PC-3 (cell line): ENCODE measurements at regions of chr19 and their contacts with region 1.

Region 1: GRCh38 chr19:44660081-44660480 is 11.2 kb upstream of the CEACAM19 start:
- DNase-seq: peak; percentile 45
- ATAC-seq: peak; percentile 63
- H3K4me3 ChIP-seq: no peak overlapping the region
- H3K27ac ChIP-seq: no peak overlapping the region
- H3K4me1 ChIP-seq: 0 out of 2 replicates have a peak, but pooled peaks cover 3% of the 10 kb centered on the region
- H3K27me3 ChIP-seq: no peaks in the 10 kb centered on the region
- CTCF ChIP-seq: no peak

Region 2: GRCh38 chr19:44576843-44577565 is 83.1 kb before region 1 on chr19:
- CTCF ChIA-PET with region 1: interaction called, 12 read pairs
- POLR2A ChIA-PET with region 1: no interaction called
- intact Hi-C with region 1: no loop called
- DNase-seq: peak; percentile 71
- ATAC-seq: peak; percentile 87
- H3K4me3 ChIP-seq: no peak overlapping the region
- H3K27ac ChIP-seq: no peak overlapping the region
- H3K4me1 ChIP-seq: peaks cover 15% of the 10 kb centered on the region
- H3K27me3 ChIP-seq: no peaks in the 10 kb centered on the region
- CTCF ChIP-seq: peak; percentile 76

Region 3: DNA sequence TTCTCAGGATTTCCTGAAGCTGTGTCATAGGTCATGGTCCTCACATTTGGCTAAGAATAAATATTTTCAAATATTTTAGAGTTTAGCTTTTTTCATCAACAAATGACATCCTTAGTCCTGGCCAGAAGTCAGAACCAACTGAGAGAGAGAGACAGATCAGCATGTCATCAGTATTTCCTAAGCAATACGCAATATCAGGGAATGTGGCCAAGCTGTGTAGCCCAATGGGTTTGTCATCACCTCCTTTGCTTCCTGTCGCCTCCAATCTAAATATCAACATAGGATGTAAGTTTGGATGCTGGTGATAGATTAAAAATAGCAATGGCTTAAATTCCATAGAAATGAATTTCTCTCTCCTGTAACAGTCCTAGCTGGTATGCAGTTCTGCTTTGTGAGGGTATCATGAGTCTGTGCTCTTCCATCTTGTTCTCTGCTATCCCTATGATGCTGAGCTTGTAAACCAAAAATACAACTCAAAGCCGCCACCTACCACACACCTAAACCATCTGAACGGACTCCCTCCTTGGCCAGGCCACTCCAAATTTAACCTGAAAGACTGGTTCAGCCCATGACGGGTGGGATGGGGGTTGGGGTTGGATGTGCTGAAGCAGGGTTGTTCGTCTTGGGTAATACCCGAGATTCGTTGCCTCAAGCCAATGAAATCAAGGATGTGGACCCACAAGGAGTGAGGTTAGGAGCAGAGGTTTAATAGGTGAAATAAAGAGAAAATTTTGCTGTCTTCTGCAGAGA is 56.7 kb before region 1 on chr19:
- CTCF ChIA-PET with region 1: no interaction called
- POLR2A ChIA-PET with region 1: no interaction called
- intact Hi-C with region 1: no loop called
- DNase-seq: peak; percentile 48
- ATAC-seq: no peak
- H3K4me3 ChIP-seq: no peak overlapping the region
- H3K27ac ChIP-seq: no peak overlapping the region
- H3K4me1 ChIP-seq: peaks cover 29% of the 10 kb centered on the region
- H3K27me3 ChIP-seq: no peaks in the 10 kb centered on the region
- CTCF ChIP-seq: no peak

Region 4: DNA sequence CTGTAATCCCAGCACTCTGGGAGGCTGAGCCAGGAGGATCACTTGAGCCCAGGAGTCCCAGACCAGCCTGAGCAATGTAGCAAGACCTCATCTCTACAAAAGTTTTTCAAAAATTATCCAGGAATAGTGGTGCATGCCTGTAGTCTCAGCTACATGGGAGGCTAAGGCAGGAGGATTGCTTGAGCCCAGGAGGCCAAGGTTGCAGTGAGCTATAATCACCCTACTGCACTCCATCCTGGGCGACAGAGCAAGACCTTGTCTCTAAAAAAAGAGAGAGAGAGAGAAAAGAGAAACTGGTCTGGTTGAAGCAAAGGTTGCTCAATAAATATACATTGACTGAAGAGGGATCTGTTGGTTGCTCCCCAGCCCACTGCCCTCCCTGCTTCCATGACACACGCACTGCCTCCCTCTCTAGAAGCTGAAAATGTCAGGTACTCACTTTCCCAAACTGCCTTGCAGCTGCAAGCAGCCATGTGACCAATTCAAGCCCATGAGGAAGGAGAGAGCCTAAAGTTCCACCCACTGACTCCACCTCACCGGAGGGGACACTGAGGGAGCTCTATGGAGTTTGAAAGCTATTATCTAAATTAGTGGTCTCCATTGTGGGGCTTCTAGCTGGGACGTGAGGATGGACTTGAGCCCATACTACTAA is 52.9 kb after region 1 on chr19:
- CTCF ChIA-PET with region 1: no interaction called
- POLR2A ChIA-PET with region 1: interaction called, 15 read pairs
- intact Hi-C with region 1: no loop called
- DNase-seq: no peak
- ATAC-seq: no peak
- H3K4me3 ChIP-seq: no peak overlapping the region
- H3K27ac ChIP-seq: no peak overlapping the region
- H3K4me1 ChIP-seq: peaks cover under 1% of the 10 kb centered on the region; the same call in 1 of the 2 replicates
- H3K27me3 ChIP-seq: no peaks in the 10 kb centered on the region
- CTCF ChIP-seq: no peak